Astrocyte of the cerebellum (primary cell): ENCODE measurements at regions of chr1 and their contacts with region 1.

Region 1: DNA sequence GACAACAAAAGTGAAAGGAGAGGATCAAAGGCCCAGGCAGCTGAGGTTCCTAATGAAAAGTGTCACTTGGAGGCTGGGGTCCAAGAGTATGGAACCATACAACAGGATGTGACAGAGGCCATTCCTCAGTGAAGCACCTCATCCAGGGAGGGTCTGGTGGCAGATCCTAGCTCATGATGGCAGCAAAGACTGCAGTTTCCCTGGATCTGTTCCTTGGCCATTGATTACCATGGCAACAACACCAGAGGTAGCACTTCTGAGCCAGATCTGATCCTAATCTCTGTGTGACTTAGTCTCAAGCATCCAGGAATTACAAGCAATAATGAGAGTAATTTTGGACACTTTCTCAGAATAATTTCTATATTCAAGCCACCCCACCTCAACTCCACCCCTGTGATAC is 12.9 kb downstream of the FAM177B start:
- DNase-seq: no peak
- H3K4me3 ChIP-seq: no peak overlapping the region
- CTCF ChIP-seq: no peak

Region 2: DNA sequence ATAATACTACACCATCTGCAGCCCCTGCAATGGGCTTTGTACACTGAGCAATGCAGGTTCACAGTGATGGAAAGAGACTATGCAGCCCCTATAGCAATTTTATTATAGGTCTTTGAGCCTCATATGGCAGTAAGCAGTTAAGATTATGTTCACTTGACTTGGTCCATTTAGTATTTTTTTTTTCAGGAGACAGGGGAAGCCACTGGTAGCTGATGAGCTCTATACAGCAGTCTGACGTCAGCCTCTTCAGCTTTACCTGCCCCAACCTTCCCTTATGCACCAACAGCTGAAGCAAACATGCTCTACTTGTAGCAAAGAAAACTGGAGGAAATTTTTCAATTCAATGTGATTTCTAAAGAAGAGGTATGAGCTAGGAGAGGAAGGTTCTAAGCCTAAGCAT is 69.8 kb before region 1 on chr1:
- in situ Hi-C with region 1: loop called (anchors 5 kb)
- DNase-seq: no peak
- H3K4me3 ChIP-seq: no peak overlapping the region
- CTCF ChIP-seq: no peak